ENCODE measurements at regions of chr22 and their contacts with region 1.

Region 1: GRCh38 chr22:46122511-46122971 is 27.8 kb upstream of the PPARA start:
- DNase-seq: peak in 1 of 2 experiments; percentile 76
- ATAC-seq: peak; percentile 47 to 74
- H3K4me3 ChIP-seq: no peak overlapping the region
- H3K27ac ChIP-seq: peak overlapping the region; percentile 59 to 85; a peak in 5 of 6 replicates
- H3K4me1 ChIP-seq: 0 out of 3 replicates have a peak, but pooled peaks cover 4% of the 10 kb centered on the region
- CTCF ChIP-seq: peak; percentile 76
- EP300 ChIP-seq: no peak
- POLR2A ChIP-seq: no peak
- RAD21 ChIP-seq: peak; percentile 77 to 84

Region 2: DNA sequence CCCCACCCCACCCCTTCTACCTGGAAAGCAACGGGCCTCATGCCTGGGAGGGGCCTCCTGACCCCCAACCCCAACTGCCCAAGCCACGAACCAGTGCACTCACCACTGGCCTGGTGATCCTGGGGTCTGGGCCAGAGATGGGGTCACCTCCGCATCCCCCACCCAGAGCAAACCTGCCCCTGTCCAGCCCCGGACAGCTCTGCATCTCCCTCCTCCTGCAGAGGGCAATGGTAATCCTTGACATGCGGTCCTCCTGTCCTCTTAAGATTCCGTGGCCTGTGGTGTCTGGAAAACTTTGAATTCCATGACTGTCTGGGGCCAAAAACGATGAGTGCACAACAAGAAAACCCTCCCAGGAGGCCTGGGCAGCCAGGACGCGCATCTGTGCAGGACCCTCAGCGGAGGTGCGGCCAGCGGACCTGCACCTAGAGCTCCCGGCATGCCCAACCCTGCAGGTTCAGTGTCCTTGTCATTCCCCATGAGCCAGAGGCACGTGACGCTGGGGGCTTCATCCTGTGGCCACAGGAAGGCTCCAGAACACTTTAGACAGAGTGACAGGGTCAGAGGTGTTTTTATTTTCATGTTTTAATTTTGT is 11.7 kb after region 1 on chr22:
- CTCF ChIA-PET with region 1: interaction called, 13 read pairs
- POLR2A ChIA-PET with region 1: no interaction called
- DNase-seq: no peak
- ATAC-seq: no peak
- H3K4me3 ChIP-seq: no peak overlapping the region
- H3K27ac ChIP-seq: no peak overlapping the region
- H3K4me1 ChIP-seq: no peaks in the 10 kb centered on the region
- CTCF ChIP-seq: no peak
- EP300 ChIP-seq: no peak
- POLR2A ChIP-seq: no peak
- RAD21 ChIP-seq: no peak

Region 3: GRCh38 chr22:46201059-46201757 is 78.7 kb after region 1 on chr22:
- CTCF ChIA-PET with region 1: no interaction called
- POLR2A ChIA-PET with region 1: no interaction called
- DNase-seq: no peak
- ATAC-seq: no peak
- H3K4me3 ChIP-seq: no peak overlapping the region
- H3K27ac ChIP-seq: no peak overlapping the region
- H3K4me1 ChIP-seq: no peaks in the 10 kb centered on the region
- CTCF ChIP-seq: no peak
- EP300 ChIP-seq: no peak
- POLR2A ChIP-seq: no peak
- RAD21 ChIP-seq: no peak

Measured in A549 (cell line).